Activated CD4-positive, alpha-beta memory T cell treated with anti-CD3 and anti-CD28 coated beads, Interleukin-2, amount 10 ng/mL, durations not matched to agents 7 days and 5 days (primary cell): ENCODE measurements at regions of chr1 and their contacts with region 1.

Region 1: GRCh38 chr1:16055613-16056520 is 12.3 kb downstream of the CLCNKB start:
- DNase-seq: peak; percentile 89
- H3K4me3 Mint-ChIP-seq: no peak overlapping the region
- H3K27ac Mint-ChIP-seq: no peak overlapping the region
- H3K4me1 Mint-ChIP-seq: peaks cover 12% of the 10 kb centered on the region
- H3K27me3 Mint-ChIP-seq: peaks cover 2% of the 10 kb centered on the region

Region 2: DNA sequence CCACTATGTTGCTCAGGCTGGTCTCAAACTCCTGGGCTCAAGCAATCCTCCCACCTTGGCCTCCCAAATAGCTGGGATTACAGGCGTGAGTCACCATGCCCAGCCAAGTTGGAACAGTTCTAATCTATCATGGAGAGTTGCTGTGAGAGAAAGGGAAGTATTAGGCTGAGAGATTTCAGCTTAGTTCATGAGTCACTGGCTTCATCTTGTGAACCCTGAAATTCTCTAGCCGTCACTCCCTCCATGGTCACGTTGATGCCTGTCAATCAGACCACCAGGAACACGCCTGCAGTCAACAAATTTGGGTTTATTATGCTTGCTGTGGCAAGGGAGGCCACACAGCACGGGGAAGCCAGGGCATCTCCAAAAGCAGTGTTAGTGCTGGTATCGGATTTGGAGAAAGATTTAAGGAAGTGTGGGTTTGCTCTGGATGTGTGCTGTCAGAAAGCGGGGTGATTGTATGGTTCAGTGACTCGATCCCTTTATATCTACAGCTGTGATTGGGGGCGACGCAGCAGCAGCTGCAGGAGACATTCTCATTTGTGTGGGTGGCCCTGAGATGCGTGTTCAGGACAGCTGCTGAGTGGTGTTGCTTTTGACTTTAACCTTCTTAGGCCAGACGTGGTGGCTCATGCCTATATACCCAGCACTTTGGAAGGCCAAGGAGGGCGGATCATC is 267.1 kb before region 1 on chr1:
- CTCF ChIA-PET with region 1: interaction called, 16 read pairs
- POLR2A ChIA-PET with region 1: no interaction called
- DNase-seq: no peak
- H3K4me3 Mint-ChIP-seq: no peak overlapping the region
- H3K27ac Mint-ChIP-seq: no peak overlapping the region
- H3K4me1 Mint-ChIP-seq: peaks cover 2% of the 10 kb centered on the region
- H3K27me3 Mint-ChIP-seq: peaks cover 10% of the 10 kb centered on the region

Region 3: DNA sequence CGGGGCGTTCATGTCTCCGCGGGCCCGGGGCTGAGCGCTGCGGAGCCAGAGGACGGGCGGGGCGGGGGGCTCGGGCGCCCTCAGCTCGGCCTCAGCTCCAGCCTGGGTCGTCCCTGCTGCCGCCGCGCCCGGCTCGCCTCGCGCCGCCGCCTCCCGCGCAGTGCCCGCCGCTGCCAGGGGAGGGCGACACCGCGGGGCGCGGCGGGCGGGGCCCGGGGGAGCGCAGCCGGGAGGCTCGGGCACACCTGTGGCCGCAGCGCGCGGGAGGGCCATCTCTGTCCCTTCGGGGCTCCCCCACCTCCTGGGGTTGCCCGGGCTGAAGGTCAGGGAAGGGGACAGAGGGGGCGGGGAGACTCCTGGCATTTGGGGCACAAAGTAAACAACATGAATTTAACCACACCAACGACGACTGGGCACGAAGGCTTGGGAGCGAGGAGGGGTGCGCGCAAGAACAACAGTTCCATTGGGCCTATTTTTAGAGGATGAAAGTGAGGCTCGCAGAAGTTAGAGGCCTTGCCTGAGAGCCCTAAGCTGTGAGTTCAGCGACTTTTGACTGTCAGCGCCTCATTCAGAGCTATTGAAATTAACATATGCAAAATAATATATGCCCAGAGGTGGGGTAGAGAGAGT is 17.7 kb after region 1 on chr1 and contains the start of gene FAM131C:
- CTCF ChIA-PET with region 1: interaction called, 11 read pairs
- POLR2A ChIA-PET with region 1: no interaction called
- DNase-seq: peak; percentile 52
- H3K4me3 Mint-ChIP-seq: peak within 1 kb of the TSS; percentile 60
- H3K27ac Mint-ChIP-seq: no peak within 1 kb of the TSS
- H3K4me1 Mint-ChIP-seq: peaks cover 55% of the 10 kb centered on the region
- H3K27me3 Mint-ChIP-seq: peaks cover 23% of the 10 kb centered on the region
- total RNA-seq, gene FAM131C: 5.1 to 5.6 TPM

Region 4: DNA sequence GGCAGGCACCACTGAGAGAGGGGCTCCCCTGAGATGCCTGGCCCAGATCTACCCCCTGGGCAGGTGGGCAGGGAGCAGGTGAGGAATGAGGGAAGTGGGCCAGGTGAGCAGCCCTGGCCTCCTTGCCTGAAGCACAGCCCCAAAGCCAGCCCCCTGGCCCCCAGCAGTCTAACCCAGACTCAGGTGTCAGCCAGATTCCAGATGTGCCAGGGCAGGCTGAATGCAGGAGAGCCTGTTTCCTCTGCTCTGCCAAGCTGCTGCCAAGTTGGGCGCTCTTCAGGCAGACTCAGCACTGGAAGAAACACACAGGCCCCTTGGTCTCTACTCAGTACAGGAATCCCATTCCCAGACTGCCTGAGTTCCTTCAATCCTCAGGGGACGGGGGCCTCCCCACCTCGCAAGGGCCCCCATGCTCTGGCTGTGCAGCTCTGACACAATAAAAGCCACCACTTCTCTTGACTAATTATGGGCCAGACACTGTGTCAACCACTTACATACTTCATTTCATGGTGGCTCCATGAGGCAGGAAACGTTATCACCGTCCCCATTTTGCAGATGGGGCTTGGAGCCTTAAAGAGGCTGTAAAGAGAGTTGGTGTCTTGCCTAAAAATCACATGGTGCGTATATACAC is 136.2 kb after region 1 on chr1:
- CTCF ChIA-PET with region 1: no interaction called
- POLR2A ChIA-PET with region 1: no interaction called
- DNase-seq: no peak
- H3K4me3 Mint-ChIP-seq: no peak overlapping the region
- H3K27ac Mint-ChIP-seq: no peak overlapping the region
- H3K4me1 Mint-ChIP-seq: peaks cover 5% of the 10 kb centered on the region
- H3K27me3 Mint-ChIP-seq: peaks cover 14% of the 10 kb centered on the region